PC-9 (cell line): ENCODE measurements at regions of chr1 and their contacts with region 1.

Region 1: DNA sequence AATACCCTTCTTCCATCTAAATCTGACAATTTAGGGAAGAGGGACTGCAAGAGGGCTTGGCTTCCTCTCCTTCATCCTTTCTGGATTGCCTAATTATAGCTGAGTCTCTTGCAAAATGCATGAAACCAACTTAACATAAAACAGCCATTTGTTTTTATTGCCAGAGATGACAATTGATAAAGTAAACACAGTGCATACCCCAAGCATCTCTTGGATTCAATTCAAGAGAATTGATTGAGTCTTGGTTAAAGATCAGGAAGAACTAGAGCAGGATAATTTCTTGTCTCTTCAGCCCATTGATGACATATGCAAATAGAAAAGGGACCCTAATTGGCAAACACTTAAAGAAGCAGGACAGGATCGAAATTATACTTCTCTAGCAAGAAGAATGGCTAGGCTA is 617.1 kb upstream of the PTBP2 start:
- DNase-seq: no peak
- H3K4me3 ChIP-seq: no peak overlapping the region
- H3K27ac ChIP-seq: no peak overlapping the region
- H3K4me1 ChIP-seq: no peaks in the 10 kb centered on the region
- H3K27me3 ChIP-seq: peaks cover 4% of the 10 kb centered on the region; the same call in 1 of the 2 replicates
- CTCF ChIP-seq: no peak

Region 2: GRCh38 chr1:96164053-96164906 is 59.8 kb after region 1 on chr1:
- CTCF ChIA-PET with region 1: no interaction called
- POLR2A ChIA-PET with region 1: interaction called, 10 read pairs
- intact Hi-C with region 1: no loop called
- DNase-seq: no peak
- H3K4me3 ChIP-seq: no peak overlapping the region
- H3K27ac ChIP-seq: no peak overlapping the region
- H3K4me1 ChIP-seq: no peaks in the 10 kb centered on the region
- H3K27me3 ChIP-seq: no peaks in the 10 kb centered on the region
- CTCF ChIP-seq: no peak

Region 3: DNA sequence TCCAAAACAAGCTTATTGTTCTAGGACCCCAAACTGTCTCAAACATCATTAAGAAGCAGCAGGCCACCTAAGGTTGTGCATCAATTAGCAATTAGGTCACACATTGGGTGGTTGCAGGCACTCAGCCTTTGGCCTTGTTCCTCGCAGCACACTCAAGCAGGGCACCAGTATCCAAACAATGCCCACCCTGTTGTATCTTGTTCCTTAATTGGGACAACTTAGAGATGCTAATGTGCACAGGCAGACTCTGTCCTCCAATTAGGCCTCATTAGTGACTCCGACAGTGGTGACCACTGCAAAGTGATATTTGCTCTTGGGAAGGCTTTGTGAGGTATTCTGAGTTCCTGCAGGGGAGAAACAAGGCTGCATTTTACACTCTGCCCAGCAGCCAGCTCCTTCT is 101.9 kb after region 1 on chr1:
- CTCF ChIA-PET with region 1: no interaction called
- POLR2A ChIA-PET with region 1: no interaction called
- intact Hi-C with region 1: no loop called
- DNase-seq: no peak
- H3K4me3 ChIP-seq: no peak overlapping the region
- H3K27ac ChIP-seq: no peak overlapping the region
- H3K4me1 ChIP-seq: no peaks in the 10 kb centered on the region
- H3K27me3 ChIP-seq: no peaks in the 10 kb centered on the region
- CTCF ChIP-seq: no peak